ENCODE measurements at regions of chr6 and their contacts with region 1.

Region 1: GRCh38 chr6:2196079-2196679 is 49.2 kb downstream of the GMDS start:
- DNase-seq: peak; percentile 31 to 61 (median 49)
- ATAC-seq: peak; percentile 88
- H3K4me3 ChIP-seq: no peak overlapping the region
- H3K27ac ChIP-seq: no peak overlapping the region
- H3K4me1 ChIP-seq: no peaks in the 10 kb centered on the region; a peak in 1 of 5 replicates
- H3K27me3 ChIP-seq: peaks cover 0 to 14% of the 10 kb centered on the region in 2 experiments; a peak in 1 of 5 replicates
- CTCF ChIP-seq: peak; percentile 52 to 74 (median 71); a peak in 5 of 6 replicates
- EP300 ChIP-seq: no peak
- POLR2A ChIP-seq: no peak
- RAD21 ChIP-seq: peak; percentile 85 to 91

Region 2: DNA sequence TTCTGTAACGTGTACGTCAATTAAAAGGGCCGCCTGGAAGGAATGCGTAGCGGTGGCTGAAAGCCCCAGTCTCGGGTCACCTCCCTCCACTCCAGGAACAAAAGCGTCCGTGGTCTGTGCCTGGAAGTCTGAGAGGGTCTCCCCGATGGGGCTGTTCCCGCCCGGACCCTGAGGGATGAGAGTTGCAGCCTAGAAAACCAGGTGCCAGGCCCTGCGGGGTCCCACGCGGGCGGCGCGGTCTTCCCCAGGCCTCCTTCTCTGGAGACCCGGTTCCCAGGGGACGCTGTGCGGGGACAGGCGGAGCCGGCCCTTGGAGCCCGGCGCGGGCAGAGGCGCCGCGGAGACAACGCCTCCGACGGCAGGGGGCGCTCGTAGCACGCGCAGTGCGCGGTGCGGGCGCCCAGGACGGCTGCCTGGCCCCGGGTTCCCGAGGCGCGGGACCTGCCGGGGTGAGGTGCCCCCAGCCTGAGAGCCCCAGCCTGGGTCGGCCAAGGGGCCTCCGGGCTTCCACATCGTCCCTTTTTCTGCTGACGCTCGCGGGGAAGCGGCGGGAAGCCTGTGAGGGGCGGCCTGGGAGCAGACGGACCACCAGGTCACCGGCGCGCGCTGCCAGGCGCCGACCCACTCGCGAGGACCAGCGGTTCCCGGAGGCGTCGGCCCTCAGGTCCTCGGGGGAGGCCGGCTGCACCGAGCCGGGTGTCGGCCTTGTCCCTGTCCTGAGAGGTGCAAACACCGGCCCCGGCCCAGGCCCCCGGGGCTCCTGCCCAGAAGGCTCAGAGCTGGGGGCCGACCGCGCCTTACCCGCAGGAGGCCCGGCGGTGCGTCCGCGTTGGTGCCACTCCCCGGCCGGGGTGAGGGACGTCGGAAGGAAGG is 591.8 kb before region 1 on chr6:
- CTCF ChIA-PET with region 1: interaction called, 4 read pairs
- POLR2A ChIA-PET with region 1: no interaction called
- in situ Hi-C with region 1: no loop called
- intact Hi-C with region 1: loop called (anchors 2 kb)
- DNase-seq: peak; percentile 72 to 88 (median 86)
- ATAC-seq: peak; percentile 99
- H3K4me3 ChIP-seq: no peak overlapping the region
- H3K27ac ChIP-seq: no peak overlapping the region
- H3K4me1 ChIP-seq: peaks cover 0 to 18% of the 10 kb centered on the region in 2 experiments; a peak in 1 of 5 replicates
- H3K27me3 ChIP-seq: peaks cover 68 to 82% of the 10 kb centered on the region in 2 experiments
- CTCF ChIP-seq: peak; percentile 75 to 95 (median 88)
- EP300 ChIP-seq: no peak
- POLR2A ChIP-seq: no peak
- RAD21 ChIP-seq: peak; percentile 99

Region 3: GRCh38 chr6:1893470-1894130 is 302.6 kb before region 1 on chr6:
- CTCF ChIA-PET with region 1: no interaction called
- POLR2A ChIA-PET with region 1: no interaction called
- in situ Hi-C with region 1: no loop called
- intact Hi-C with region 1: loop called (anchors 5 kb)
- DNase-seq: peak in 2 of 4 experiments; percentile 18 to 20
- ATAC-seq: 0 out of 3 replicates have a peak, but pooled peaks have one; percentile 42
- H3K4me3 ChIP-seq: no peak overlapping the region
- H3K27ac ChIP-seq: no peak overlapping the region
- H3K4me1 ChIP-seq: no peaks in the 10 kb centered on the region
- H3K27me3 ChIP-seq: peaks cover 3 to 11% of the 10 kb centered on the region in 2 experiments; a peak in 4 of 5 replicates
- CTCF ChIP-seq: peak; percentile 32 to 52 (median 43); a peak in 2 of 6 replicates
- EP300 ChIP-seq: no peak
- POLR2A ChIP-seq: no peak
- RAD21 ChIP-seq: peak; percentile 61 to 65

Region 4: DNA sequence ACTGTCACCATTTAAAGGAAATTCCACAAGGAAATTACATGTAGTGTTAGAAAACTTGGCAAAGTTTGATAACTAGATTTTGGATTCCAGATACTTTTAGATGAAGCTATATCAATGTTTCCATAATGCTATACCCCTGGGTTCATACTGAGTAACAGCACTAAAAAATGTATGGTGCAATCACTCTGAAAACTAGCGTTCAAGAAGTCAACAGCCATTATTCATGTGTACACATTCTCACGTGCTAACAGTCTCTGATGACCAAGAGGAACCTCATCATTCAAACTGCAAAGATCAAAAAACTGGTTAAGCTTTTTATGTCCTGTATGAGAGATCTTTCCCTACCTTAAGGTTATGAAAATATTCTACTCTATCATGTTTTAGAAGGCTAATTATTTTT is 148.3 kb before region 1 on chr6:
- CTCF ChIA-PET with region 1: no interaction called
- POLR2A ChIA-PET with region 1: no interaction called
- in situ Hi-C with region 1: no loop called
- intact Hi-C with region 1: no loop called
- DNase-seq: no peak
- ATAC-seq: no peak
- H3K4me3 ChIP-seq: no peak overlapping the region
- H3K27ac ChIP-seq: no peak overlapping the region
- H3K4me1 ChIP-seq: no peaks in the 10 kb centered on the region
- H3K27me3 ChIP-seq: no peaks in the 10 kb centered on the region; a peak in 2 of 5 replicates
- CTCF ChIP-seq: no peak
- EP300 ChIP-seq: no peak
- POLR2A ChIP-seq: no peak
- RAD21 ChIP-seq: no peak

Region 5: DNA sequence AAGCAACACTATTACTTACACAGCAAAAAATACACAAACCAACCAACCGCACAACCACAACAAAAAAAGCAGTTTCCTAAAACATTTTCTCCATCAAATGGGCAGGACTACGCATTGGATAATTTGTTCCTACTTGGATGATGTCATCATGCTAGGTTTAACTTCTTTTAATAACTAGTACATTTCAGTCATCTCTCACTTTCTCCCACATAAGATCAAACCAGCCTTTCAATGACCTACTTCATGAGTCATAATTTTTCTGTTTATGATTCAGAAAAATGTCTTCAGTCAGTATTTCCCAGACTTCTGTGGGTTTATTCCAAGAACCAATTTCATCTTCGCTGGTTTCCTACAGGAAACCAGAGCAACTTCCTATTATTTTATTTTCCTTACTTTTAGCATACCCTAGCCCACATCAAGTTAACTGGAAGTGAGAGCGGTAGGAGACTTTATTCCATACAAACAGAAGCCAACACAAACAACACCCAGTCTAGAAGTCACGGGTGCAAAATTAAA is 85.0 kb before region 1 on chr6:
- CTCF ChIA-PET with region 1: no interaction called
- POLR2A ChIA-PET with region 1: no interaction called
- in situ Hi-C with region 1: no loop called
- intact Hi-C with region 1: no loop called
- DNase-seq: no peak
- ATAC-seq: no peak
- H3K4me3 ChIP-seq: no peak overlapping the region
- H3K27ac ChIP-seq: no peak overlapping the region
- H3K4me1 ChIP-seq: no peaks in the 10 kb centered on the region
- H3K27me3 ChIP-seq: no peaks in the 10 kb centered on the region; a peak in 1 of 5 replicates
- CTCF ChIP-seq: no peak
- EP300 ChIP-seq: no peak
- POLR2A ChIP-seq: no peak
- RAD21 ChIP-seq: no peak

Region 6: GRCh38 chr6:2680264-2680922 is 484.2 kb after region 1 on chr6:
- CTCF ChIA-PET with region 1: no interaction called
- POLR2A ChIA-PET with region 1: no interaction called
- in situ Hi-C with region 1: no loop called
- intact Hi-C with region 1: no loop called
- DNase-seq: no peak
- ATAC-seq: no peak
- H3K4me3 ChIP-seq: no peak overlapping the region
- H3K27ac ChIP-seq: no peak overlapping the region
- H3K4me1 ChIP-seq: peaks cover 0 to 6% of the 10 kb centered on the region in 2 experiments; a peak in 1 of 5 replicates
- H3K27me3 ChIP-seq: peaks cover 11 to 16% of the 10 kb centered on the region in 2 experiments
- CTCF ChIP-seq: no peak
- EP300 ChIP-seq: no peak
- POLR2A ChIP-seq: no peak
- RAD21 ChIP-seq: no peak